ENCODE measurements at regions of chr11 and their contacts with region 1.

Region 1: GRCh38 chr11:57345555-57346211 is 7.5 kb downstream of the P2RX3 start:
- DNase-seq: peak; percentile 71 to 73
- H3K4me3 ChIP-seq: no peak overlapping the region
- H3K27ac ChIP-seq: no peak overlapping the region
- H3K4me1 ChIP-seq: no peaks in the 10 kb centered on the region
- H3K27me3 ChIP-seq: no peaks in the 10 kb centered on the region
- CTCF ChIP-seq: peak; percentile 90

Region 2: DNA sequence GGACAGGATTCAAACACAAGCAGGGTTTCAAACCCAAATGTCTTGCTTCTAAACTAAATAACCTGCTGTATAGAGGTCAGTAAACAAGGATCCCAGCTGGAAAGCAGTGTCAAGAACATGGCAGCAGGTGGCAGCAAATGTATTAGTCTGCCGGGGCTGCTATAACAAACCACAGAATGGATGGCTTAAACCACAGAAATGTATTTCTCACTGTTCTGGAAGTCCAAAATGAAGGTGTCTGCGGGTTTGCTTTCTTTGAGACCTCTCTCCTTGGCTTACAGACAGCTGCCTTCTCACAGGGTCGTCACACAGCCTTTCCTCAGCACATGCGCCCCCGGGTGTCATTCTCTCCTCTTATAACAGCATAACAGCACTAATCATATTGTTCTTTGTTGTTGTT is 229.0 kb before region 1 on chr11:
- CTCF ChIA-PET with region 1: interaction called, 9 read pairs
- POLR2A ChIA-PET with region 1: no interaction called
- intact Hi-C with region 1: loop called (anchors 1 kb)
- DNase-seq: peak; percentile 34 to 65
- H3K4me3 ChIP-seq: no peak overlapping the region
- H3K27ac ChIP-seq: no peak overlapping the region
- H3K4me1 ChIP-seq: peaks cover 8% of the 10 kb centered on the region
- H3K27me3 ChIP-seq: no peaks in the 10 kb centered on the region
- CTCF ChIP-seq: peak; percentile 86

Region 3: GRCh38 chr11:57249384-57250319 is 96.0 kb before region 1 on chr11:
- CTCF ChIA-PET with region 1: no interaction called
- POLR2A ChIA-PET with region 1: interaction called, 15 read pairs
- intact Hi-C with region 1: no loop called
- DNase-seq: peak; percentile 67 to 69
- H3K4me3 ChIP-seq: no peak overlapping the region
- H3K27ac ChIP-seq: peak overlapping the region; percentile 40; the same call in 1 of the 2 replicates
- H3K4me1 ChIP-seq: peaks cover 17% of the 10 kb centered on the region
- H3K27me3 ChIP-seq: no peaks in the 10 kb centered on the region
- CTCF ChIP-seq: peak; percentile 90

Region 4: GRCh38 chr11:57480409-57481137 is 134.9 kb after region 1 on chr11:
- CTCF ChIA-PET with region 1: interaction called, 3 read pairs
- POLR2A ChIA-PET with region 1: no interaction called
- intact Hi-C with region 1: loop called (anchors 5 kb)
- DNase-seq: peak; percentile 62 to 69
- H3K4me3 ChIP-seq: no peak overlapping the region
- H3K27ac ChIP-seq: no peak overlapping the region
- H3K4me1 ChIP-seq: peaks cover 6% of the 10 kb centered on the region; the same call in 1 of the 2 replicates
- H3K27me3 ChIP-seq: peaks cover 28% of the 10 kb centered on the region
- CTCF ChIP-seq: peak; percentile 90

Region 5: GRCh38 chr11:57644748-57645688 is 299.3 kb after region 1 on chr11:
- CTCF ChIA-PET with region 1: interaction called, 11 read pairs
- POLR2A ChIA-PET with region 1: no interaction called
- intact Hi-C with region 1: loop called (anchors 1 kb)
- DNase-seq: peak; percentile 60 to 83
- H3K4me3 ChIP-seq: no peak overlapping the region
- H3K27ac ChIP-seq: no peak overlapping the region
- H3K4me1 ChIP-seq: peaks cover 3% of the 10 kb centered on the region; the same call in 1 of the 2 replicates
- H3K27me3 ChIP-seq: peaks cover 46% of the 10 kb centered on the region
- CTCF ChIP-seq: peak; percentile 98

Region 6: GRCh38 chr11:58675334-58676155 is 1329.9 kb after region 1 on chr11:
- CTCF ChIA-PET with region 1: no interaction called
- POLR2A ChIA-PET with region 1: no interaction called
- intact Hi-C with region 1: loop called (anchors 5 kb)
- DNase-seq: peak; percentile 59 to 76
- H3K4me3 ChIP-seq: no peak overlapping the region
- H3K27ac ChIP-seq: no peak overlapping the region
- H3K4me1 ChIP-seq: no peaks in the 10 kb centered on the region
- H3K27me3 ChIP-seq: no peaks in the 10 kb centered on the region
- CTCF ChIP-seq: peak; percentile 97

Measured in PC-9 (cell line).